Activated T-helper 1 cell treated with anti-CD3 and anti-CD28 coated beads, Interleukin-12 subunit alpha, Interleukin-12 subunit beta, Interleukin-2, Interleukin-4 antibody, amounts not matched to agents 30 ng/mL and 10 ng/mL and 1 ng/mL, durations not matched to agents 14 hours and 24 hours and 36 hours (primary cell): ENCODE measurements at regions of chr5 and their contacts with region 1.

Region 1: GRCh38 chr5:121962347-121962670 is 534 bp downstream of the SRFBP1 start:
- DNase-seq: no peak
- H3K4me3 Mint-ChIP-seq: peak overlapping the region; percentile 97
- H3K27ac Mint-ChIP-seq: peak overlapping the region; percentile 95
- H3K4me1 Mint-ChIP-seq: peaks cover 21% of the 10 kb centered on the region
- H3K27me3 Mint-ChIP-seq: peaks cover 4% of the 10 kb centered on the region

Region 2: DNA sequence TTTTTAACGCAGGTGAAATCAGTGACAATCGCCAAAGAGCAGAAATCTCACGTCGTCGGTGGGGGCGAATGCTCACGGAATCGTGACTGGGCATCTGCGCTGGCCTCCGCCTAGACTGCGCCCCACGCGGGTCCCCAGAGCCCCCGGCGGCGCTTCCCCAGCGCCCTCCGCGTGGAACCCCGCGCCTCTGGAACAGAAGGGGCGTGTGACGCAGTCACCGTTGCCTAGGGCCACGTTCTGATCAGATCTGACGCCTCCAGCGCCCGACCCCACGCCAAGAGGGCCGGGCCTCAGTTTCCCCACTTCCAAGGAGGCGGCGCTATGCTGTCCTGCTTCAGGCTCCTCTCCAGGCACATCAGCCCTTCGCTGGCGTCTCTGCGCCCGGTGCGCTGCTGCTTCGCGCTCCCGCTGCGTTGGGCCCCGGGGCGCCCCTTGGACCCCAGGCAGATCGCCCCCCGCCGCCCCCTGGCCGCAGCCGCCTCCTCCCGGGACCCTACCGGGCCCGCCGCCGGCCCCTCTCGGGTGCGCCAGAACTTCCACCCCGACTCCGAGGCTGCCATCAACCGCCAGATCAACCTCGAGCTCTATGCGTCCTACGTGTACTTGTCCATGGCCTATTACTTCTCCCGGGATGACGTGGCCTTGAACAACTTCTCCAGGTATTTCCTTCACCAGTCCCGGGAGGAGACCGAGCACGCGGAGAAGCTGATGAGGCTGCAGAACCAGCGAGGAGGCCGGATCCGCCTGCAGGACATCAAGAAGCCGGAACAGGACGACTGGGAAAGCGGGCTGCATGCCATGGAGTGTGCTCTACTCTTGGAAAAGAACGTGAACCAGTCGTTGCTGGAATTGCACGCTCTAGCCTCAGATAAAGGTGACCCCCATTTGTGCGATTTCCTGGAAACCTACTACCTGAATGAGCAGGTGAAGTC is 110.4 kb before region 1 on chr5 and contains the start of gene FTMT:
- intact Hi-C with region 1: no loop called
- DNase-seq: no peak
- H3K4me3 Mint-ChIP-seq: no peak within 1 kb of the TSS
- H3K27ac Mint-ChIP-seq: no peak within 1 kb of the TSS
- H3K4me1 Mint-ChIP-seq: no peaks in the 10 kb centered on the region
- H3K27me3 Mint-ChIP-seq: no peaks in the 10 kb centered on the region
- total RNA-seq, gene FTMT: not detected in 2 replicates

Region 3: DNA sequence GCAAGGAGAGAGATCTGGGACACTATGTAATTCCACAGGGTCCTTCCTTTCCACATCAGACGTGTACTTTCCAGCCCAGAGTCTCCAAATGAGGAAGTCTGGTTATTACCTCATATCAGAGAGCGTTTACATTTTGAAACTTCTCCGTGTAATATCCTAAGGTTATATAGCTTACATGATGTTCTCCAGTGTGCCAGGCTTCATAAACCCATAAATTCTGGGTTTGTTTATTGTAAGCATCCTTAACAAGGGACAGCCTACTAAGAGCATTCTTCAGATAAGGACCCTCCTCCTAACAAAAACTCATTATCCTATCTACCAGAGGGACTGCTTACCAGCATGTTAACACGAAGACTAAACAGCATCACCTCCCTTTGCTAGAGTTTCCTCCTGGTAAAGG is 17.4 kb after region 1 on chr5:
- intact Hi-C with region 1: loop called (anchors 1 kb)
- DNase-seq: no peak
- H3K4me3 Mint-ChIP-seq: no peak overlapping the region
- H3K27ac Mint-ChIP-seq: no peak overlapping the region
- H3K4me1 Mint-ChIP-seq: peaks cover 10% of the 10 kb centered on the region
- H3K27me3 Mint-ChIP-seq: no peaks in the 10 kb centered on the region

Region 4: GRCh38 chr5:122019919-122020590 is 57.7 kb after region 1 on chr5:
- intact Hi-C with region 1: loop called (anchors 1 kb)
- DNase-seq: no peak
- H3K4me3 Mint-ChIP-seq: peak overlapping the region; percentile 28
- H3K27ac Mint-ChIP-seq: peak overlapping the region; percentile 52
- H3K4me1 Mint-ChIP-seq: peaks cover 10% of the 10 kb centered on the region
- H3K27me3 Mint-ChIP-seq: no peaks in the 10 kb centered on the region

Region 5: DNA sequence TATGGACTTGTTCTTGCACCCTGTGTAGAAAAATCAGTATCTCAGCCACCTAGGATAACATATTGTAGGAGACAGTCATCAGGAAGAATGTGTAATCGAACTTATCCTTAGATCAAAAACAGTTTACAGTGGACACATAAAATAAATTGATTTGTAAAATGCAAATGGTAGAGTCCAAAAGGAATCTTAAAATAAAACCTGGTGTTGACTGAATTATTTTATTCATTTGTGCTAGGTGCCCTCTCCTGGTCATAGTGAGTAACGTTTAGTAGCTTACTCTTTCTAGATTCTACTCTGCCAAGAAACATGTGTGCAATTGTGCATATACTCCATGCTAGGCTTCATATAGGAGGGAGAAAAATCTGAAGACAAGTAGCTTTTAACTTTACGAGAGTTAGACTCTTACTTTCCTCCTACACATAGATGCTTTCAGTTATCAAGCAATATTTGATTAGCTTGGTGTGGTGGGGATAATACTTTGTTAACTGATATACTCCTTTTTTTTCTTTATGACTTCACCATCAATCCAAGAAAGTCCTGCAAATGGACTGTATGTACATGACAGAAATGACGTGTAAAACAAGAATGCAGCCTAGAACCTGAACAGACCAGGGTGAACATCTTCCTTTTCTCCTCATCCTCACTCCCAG is 139.5 kb after region 1 on chr5:
- intact Hi-C with region 1: loop called (anchors 1 kb)
- DNase-seq: no peak
- H3K4me3 Mint-ChIP-seq: no peak overlapping the region
- H3K27ac Mint-ChIP-seq: no peak overlapping the region
- H3K4me1 Mint-ChIP-seq: no peaks in the 10 kb centered on the region
- H3K27me3 Mint-ChIP-seq: peaks cover 11% of the 10 kb centered on the region

Region 6: DNA sequence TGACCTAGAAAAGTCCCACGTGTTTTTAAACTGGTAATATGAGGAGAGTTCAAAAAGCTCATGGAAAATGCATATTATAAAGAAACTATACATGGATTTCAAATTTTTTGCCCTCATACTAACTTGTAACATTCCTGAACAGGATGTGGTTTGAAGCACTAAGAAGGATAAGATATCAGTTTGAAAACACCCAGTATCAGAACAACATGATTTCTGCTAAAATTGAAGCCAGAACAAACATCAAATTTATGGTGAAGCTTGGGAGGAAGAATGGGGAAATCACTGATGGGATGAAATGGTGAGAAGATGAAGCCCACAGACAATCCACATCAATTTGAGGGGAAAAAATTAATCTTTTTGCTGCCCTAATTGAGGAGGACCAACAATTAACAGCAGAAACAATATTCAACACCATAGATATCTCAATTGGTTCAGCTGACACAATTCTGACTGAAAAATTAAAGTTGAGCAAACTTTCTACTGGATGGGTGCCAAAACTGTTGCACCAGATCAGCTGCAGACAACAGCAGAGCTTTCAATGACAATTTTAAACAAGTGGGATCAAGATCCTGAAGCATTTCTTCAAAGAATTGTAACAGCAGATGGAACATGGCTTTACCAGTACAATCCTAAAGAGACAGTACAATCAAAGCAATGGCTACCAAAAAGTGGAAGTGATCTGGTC is 699.3 kb after region 1 on chr5:
- intact Hi-C with region 1: no loop called
- DNase-seq: no peak
- H3K4me3 Mint-ChIP-seq: no peak overlapping the region
- H3K27ac Mint-ChIP-seq: no peak overlapping the region
- H3K4me1 Mint-ChIP-seq: no peaks in the 10 kb centered on the region
- H3K27me3 Mint-ChIP-seq: peaks cover 2% of the 10 kb centered on the region

Region 7: DNA sequence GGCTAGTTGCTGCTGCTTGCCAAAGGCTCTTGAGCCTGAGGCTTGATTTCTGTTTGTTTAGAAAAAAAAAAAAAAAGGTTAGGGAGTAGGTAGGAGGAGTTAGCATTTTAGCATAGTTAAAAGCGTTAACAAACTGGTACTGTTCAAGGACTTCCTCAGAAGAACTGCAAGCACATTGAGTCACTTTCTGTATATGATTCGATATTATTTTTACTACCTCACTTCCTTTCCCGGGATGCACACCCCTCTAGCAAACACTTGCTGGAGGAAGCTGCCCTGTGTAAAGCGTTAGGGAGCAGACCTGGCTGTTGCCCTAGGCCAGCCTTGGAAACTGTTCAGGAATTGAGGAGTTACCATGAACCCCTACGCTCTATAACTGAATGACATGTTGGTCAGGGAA is 1476.6 kb after region 1 on chr5:
- intact Hi-C with region 1: loop called (anchors 5 kb)
- DNase-seq: peak; percentile 29
- H3K4me3 Mint-ChIP-seq: peak overlapping the region; percentile 27
- H3K27ac Mint-ChIP-seq: peak overlapping the region; percentile 74
- H3K4me1 Mint-ChIP-seq: peaks cover 36% of the 10 kb centered on the region
- H3K27me3 Mint-ChIP-seq: no peaks in the 10 kb centered on the region